ENCODE measurements at regions of chr2 and their contacts with region 1.

Region 1: DNA sequence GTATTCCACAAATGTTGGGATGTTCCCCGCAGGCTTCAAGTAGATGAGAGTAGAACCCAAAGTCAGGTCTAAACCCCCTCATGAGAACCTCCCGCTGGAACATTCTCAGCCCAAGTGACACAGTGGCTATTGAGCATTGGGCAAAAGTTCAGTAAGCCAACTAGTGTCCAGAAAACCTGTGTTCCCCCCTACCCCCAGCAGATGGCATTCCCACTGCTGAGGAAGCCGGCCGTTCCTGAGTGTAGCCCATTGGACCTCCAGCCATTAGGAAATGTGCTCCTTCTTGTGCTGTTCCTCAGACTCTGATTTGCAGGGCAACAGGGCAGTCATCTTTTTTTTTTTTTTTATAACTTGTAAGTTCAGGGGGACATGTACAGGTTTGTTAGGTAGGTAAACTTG is 152.1 kb downstream of the NCK2 start:
- DNase-seq: no peak
- H3K4me3 Mint-ChIP-seq: no peak overlapping the region
- H3K27ac Mint-ChIP-seq: no peak overlapping the region
- H3K4me1 Mint-ChIP-seq: peaks cover 10% of the 10 kb centered on the region
- H3K27me3 Mint-ChIP-seq: no peaks in the 10 kb centered on the region

Region 2: DNA sequence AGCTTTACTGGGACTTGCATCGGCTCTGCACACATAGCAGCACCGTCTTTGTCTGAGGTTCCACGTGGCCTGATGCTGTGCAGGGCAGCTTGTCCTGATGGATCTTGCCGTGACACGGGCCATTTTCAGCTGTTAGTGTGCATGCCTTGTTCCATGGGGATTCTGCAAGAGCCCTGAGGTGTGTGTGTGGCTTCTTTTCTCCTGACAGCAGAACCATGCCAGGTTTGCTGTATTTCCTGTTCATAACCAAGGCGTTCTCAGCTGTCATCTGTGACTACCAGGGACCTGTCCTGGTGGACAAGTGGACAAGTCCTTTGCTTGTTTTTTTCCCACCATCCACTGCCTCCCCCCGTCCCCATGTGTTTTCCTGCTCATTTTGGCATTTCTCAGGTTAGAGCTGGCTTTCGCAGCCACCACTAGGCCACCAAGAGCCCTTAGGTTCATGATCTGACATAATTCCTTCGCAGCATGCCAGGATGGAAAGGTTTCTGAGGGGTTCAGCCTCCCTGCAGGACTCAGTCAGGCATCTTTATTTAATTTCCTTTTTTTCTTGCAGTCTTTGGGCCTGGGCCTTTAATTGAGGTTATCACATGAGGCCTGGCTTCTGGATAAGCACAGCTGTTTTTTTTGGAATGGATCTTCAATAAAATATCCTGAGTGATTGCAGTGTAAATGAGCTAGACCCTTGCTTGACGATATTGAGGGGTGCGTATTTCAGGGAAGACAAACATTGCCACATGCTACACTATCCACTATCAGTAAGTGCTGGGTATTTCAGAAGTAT is 12.7 kb before region 1 on chr2:
- intact Hi-C with region 1: loop called (anchors 2 kb)
- DNase-seq: no peak
- H3K4me3 Mint-ChIP-seq: no peak overlapping the region
- H3K27ac Mint-ChIP-seq: peak overlapping the region; percentile 54
- H3K4me1 Mint-ChIP-seq: peaks cover 48% of the 10 kb centered on the region
- H3K27me3 Mint-ChIP-seq: no peaks in the 10 kb centered on the region

Region 3: GRCh38 chr2:106147159-106147558 is 250.4 kb after region 1 on chr2:
- intact Hi-C with region 1: no loop called
- DNase-seq: no peak
- H3K4me3 Mint-ChIP-seq: no peak overlapping the region
- H3K27ac Mint-ChIP-seq: peak overlapping the region; percentile 42
- H3K4me1 Mint-ChIP-seq: peaks cover 39% of the 10 kb centered on the region
- H3K27me3 Mint-ChIP-seq: no peaks in the 10 kb centered on the region